ENCODE measurements at regions of chr16 and their contacts with region 1.

Region 1: DNA sequence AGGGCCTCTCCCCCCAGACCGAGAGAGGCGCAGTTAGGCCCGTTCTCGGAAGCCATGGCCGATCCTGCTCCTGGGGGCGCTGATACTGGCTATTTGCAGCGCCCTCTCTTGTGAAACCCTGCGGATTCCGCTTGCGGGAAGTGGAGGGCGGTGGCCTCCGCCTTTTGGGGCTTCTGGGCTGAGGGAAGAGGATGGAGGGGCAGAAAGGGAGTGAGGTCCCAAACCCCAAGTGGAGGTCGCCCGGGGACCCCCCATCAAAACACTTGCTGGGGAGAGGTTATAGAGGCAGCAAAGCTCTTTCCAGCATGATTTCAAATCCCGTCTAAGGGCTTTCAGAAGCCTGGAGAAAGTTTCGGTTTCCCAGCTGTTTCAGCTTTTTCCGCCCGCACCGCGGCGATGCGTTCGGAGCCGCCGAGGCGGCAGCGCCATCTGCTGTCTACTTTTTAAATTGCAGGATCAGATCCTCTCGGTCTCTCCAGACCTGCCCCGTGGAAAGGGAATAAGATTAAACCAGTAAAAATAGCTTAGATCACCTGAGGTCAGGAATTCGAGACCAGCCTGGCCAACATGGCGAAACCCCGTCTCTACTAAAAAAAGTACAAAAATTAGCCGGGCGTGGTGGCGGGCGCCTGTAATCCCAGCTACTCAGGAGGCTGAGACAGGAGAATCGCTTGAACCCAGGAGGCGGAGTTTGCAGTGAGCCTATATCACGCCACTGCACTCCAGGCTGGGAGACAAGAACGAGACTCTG is 15.8 kb downstream of the SNX20 start:
- DNase-seq: peak; percentile 75 to 94 (median 87)
- ATAC-seq: peak; percentile 88 to 93 (median 92)
- H3K4me3 ChIP-seq: peak overlapping the region in 3 of 4 donors; percentile 18 to 42 (median 23)
- H3K27ac ChIP-seq: peak overlapping the region in 2 of 4 donors; percentile 34 to 44
- H3K4me1 ChIP-seq: peaks cover 0 to 7% (median 0%) of the 10 kb centered on the region in 3 donors
- H3K27me3 ChIP-seq: no peaks in the 10 kb centered on the region
- CTCF ChIP-seq: peak; percentile 87 to 95 (median 90)

Region 2: DNA sequence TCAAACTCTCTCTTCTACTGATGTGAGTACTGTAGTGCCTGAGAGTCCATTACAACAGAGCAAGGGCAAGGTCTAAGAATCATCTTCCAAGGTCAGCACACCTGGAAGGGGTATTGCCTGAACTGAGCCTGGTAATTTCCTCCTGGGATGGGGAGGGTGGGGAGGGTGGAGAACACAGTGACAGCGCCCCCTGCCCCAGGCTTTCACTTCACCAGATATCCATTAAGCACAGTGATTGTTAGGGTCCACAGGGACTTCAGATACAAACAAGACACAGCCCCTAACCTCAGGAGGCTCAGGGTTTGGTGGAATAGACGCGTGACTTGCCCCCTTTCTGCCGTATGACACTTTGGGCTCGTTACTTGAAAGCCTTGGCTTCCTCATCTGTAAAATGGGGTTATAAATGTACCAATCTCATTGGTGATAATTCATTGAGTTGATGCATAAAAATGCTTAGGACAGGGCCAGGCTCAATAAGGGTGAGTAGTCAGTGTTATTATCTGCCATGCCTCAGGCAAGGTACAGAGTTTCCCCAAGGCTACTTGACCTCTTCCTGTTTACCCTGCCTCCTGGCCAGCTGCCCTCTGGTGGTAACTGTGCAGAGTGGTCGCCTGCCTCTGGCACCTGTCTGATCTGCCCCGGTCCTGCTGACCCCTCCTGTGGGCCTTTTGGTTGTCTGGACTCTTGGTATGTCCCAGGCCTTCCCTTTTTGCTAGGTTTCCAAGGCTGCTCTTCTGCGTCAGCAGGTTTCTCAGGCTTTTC is 283.4 kb before region 1 on chr16:
- intact Hi-C with region 1: loop called in 2 of 3 experiments (anchors 5 kb)
- DNase-seq: no peak
- ATAC-seq: peak in 1 of 4 donors; percentile 17
- H3K4me3 ChIP-seq: no peak overlapping the region
- H3K27ac ChIP-seq: no peak overlapping the region
- H3K4me1 ChIP-seq: no peaks in the 10 kb centered on the region
- H3K27me3 ChIP-seq: no peaks in the 10 kb centered on the region
- CTCF ChIP-seq: no peak

Region 3: DNA sequence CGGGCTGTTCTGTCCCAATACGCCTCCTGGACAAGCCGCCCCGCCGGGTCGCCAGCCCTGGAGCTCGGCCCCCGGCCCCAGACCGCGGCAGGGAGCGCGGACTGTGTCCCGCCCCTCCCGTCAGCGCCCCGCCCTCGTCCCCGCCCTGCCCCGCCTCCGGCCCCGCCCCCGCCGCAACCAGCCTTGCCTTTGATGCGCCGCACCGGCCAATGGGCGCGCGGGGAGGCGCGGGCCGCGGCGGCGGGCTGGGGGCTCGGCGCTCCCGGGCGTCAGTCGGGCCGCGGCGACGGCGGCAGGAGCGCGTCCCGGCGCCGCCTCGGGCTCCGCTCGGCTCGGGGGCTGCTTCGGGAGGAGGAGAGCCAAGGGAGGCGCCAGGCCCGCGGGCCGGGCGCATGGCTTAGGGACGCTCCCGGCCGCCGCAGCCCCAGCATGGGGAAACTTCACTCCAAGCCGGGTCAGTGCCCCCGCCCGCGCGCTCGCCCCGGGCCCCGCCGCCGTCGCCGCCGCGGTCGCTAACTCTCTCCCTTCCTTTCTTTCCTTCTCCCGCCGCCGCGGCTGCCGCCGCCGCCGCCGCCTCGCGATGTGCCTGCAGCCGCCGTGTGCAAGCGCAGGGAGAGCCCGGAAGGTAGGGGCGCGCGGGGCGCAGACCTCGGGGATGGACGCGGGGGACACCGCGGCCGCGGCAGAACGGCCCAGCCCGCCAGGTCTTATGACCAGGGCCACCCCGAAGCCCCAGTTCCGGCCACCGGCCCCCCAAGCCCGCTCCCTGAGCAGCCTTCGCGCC is 117.0 kb before region 1 on chr16 and contains the start of gene NKD1:
- intact Hi-C with region 1: loop called in 1 of 3 experiments (anchors 10 kb)
- DNase-seq: peak; percentile 61 to 93 (median 78)
- ATAC-seq: peak; percentile 90 to 95 (median 92)
- H3K4me3 ChIP-seq: peak within 1 kb of the TSS; percentile 75 to 87 (median 82)
- H3K27ac ChIP-seq: peak within 1 kb of the TSS in 1 of 4 donors; percentile 41
- H3K4me1 ChIP-seq: no peaks in the 10 kb centered on the region
- H3K27me3 ChIP-seq: no peaks in the 10 kb centered on the region
- CTCF ChIP-seq: no peak
- total RNA-seq, gene NKD1: 3.0 to 5.8 (median 5.1) TPM